Activated naive CD4-positive, alpha-beta T cell treated with anti-CD3 and anti-CD28 coated beads for 36 hours (primary cell): ENCODE measurements at regions of chr1 and their contacts with region 1.

Region 1: DNA sequence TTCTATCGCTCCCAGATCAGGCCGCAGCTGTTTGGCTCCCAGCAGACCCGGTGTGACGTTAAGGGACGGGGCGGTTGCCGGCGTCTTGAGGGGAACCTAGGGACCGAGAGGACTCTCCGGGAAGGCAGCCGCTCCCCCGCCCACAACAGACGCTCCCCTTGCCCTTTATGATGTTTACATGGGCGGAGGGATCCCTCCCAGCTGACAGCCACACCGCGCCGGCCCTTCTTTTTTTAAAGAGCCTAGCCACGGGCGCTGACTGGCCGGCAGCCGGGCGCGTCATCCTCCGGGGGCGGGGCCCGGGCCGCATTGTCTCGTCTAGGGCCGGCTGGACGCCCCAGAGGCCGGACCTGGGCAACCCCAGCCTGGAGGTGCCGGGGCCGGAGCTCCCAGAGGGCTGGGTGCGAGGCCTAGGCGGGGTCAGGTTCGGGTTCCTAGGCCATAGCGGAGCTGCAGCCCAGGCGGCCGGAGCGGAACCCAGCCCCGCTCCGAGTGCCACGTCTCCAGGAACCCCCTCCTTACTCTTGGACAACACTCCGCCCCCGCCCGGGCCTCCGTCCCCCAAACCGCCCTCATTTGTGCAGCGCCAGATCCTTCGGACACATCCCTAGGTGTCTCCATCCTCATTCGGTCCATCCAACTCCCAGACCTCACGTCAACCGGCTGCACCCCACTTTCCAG is at the start of gene PCAT6:
- DNase-seq: peak; percentile 90
- H3K4me3 Mint-ChIP-seq: peak within 1 kb of the TSS; percentile 74
- H3K27ac Mint-ChIP-seq: no peak within 1 kb of the TSS
- H3K4me1 Mint-ChIP-seq: peaks cover 31% of the 10 kb centered on the region
- H3K27me3 Mint-ChIP-seq: no peaks in the 10 kb centered on the region
- total RNA-seq, gene PCAT6: 0.37 to 0.43 TPM

Region 2: GRCh38 chr1:202821452-202821851 is 10.7 kb after region 1 on chr1:
- CTCF ChIA-PET with region 1: no interaction called
- intact Hi-C with region 1: no loop called
- DNase-seq: no peak
- H3K4me3 Mint-ChIP-seq: no peak overlapping the region
- H3K27ac Mint-ChIP-seq: no peak overlapping the region
- H3K4me1 Mint-ChIP-seq: no peaks in the 10 kb centered on the region
- H3K27me3 Mint-ChIP-seq: no peaks in the 10 kb centered on the region

Region 3: DNA sequence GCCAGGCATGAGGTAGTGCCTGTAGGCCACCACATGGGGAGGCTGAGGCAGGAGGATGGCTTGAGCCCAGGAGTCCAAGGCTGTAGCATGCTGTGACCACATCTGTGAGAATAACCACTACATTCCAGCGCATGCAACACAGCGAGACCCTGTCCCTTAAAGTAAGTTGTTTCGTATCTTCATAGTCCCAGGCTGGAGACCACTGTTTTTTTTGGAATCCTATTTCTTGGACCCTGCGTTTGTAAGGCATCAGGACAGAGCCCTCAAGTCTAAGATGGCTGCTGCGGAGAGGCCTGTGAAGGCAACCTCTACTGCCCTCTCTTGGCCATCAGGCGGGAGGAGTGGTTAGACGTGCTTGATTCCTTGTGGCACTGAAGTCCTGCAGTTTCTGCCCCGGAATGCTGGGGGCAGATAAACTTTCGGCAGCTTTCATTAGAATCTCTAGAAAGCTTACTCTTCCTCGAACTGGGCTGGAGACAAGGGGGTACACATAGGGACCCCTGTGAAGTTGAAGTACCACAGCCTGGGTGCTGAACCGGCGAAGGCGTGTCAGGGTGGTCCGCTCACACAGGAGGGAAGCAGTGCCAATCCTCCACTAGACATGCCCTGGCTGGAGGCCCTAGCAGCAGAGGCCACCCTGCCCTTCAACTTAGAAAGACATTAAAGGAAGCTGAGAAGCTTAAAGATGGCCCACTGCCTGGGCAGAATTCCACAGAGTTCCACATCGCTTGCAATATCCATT is 41.6 kb after region 1 on chr1:
- CTCF ChIA-PET with region 1: no interaction called
- intact Hi-C with region 1: loop called (anchors 2 kb)
- DNase-seq: peak; percentile 69
- H3K4me3 Mint-ChIP-seq: no peak overlapping the region
- H3K27ac Mint-ChIP-seq: no peak overlapping the region
- H3K4me1 Mint-ChIP-seq: no peaks in the 10 kb centered on the region
- H3K27me3 Mint-ChIP-seq: no peaks in the 10 kb centered on the region

Region 4: GRCh38 chr1:202968840-202969295 is 158.1 kb after region 1 on chr1:
- CTCF ChIA-PET with region 1: no interaction called
- intact Hi-C with region 1: loop called (anchors 2 kb)
- DNase-seq: peak; percentile 56
- H3K4me3 Mint-ChIP-seq: no peak overlapping the region
- H3K27ac Mint-ChIP-seq: no peak overlapping the region
- H3K4me1 Mint-ChIP-seq: peaks cover 28% of the 10 kb centered on the region
- H3K27me3 Mint-ChIP-seq: no peaks in the 10 kb centered on the region

Region 5: DNA sequence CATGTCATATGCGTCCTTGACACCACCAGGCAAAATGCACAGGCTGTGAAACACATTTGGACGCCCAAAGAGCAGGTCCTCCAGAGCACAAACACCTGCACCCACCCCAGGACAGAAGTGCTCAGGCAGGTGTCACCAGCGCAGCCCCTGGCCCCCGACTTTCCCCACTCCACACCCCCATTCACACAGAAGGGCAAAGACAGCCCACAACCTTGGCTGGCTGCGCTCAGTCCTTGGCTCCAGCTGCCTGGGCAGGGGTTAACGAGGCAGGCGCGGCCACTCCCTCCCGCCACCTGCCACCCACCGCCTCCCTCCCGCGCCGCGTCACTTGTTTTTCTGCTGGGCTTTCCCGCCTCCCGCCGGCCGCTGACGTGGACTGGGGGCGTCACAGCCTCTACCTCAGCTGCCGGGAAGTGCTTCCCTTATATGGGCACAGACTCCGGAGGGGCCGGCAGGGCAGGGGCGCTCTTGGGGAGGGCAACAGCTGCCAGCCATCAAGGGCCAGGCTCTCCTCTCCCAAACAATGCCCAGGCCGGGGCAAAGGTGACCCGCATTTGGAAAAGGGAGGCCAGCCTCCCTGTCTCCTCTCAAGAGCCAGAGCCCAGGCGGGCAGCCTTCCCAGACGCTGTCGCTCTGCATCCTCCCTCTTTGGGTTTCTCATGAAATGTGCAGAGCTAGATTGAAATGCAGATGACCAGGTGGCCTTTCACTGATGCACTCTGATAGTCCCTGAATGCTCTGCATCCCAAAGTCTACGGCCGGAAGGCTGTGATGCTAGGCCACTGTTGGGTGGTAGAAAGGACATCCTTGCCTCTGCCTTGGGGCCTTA is 479.7 kb after region 1 on chr1:
- CTCF ChIA-PET with region 1: no interaction called
- intact Hi-C with region 1: loop called (anchors 5 kb)
- DNase-seq: peak; percentile 99
- H3K4me3 Mint-ChIP-seq: peak overlapping the region; percentile 83
- H3K27ac Mint-ChIP-seq: peak overlapping the region; percentile 99
- H3K4me1 Mint-ChIP-seq: peaks cover 82% of the 10 kb centered on the region
- H3K27me3 Mint-ChIP-seq: no peaks in the 10 kb centered on the region